ENCODE measurements at regions of chr18 and their contacts with region 1.

Region 1: DNA sequence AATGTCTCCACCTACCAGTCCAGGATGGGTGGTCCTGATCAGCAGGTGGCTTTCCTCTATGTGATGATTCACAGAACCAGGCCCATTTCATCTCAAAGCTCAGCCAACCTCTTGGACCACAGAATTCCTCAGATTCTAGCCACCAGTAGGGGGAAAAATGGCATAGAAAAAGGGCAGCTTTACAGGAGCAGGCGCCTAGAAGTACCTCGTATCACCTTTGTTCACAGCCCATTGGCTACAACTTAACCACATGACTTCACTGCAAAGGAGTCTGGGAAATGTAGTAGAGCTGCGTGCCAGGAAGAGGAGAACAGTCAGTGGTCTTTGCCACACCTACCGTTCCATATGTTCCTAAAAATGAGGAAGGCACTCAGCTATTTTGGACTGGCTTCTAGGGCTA is 62.8 kb upstream of the DTNA start:
- DNase-seq: no peak
- H3K4me3 ChIP-seq: no peak overlapping the region
- H3K27ac ChIP-seq: peak overlapping the region in 1 of 4 donors; percentile 66
- H3K4me1 ChIP-seq: peaks cover 0 to 59% (median 43%) of the 10 kb centered on the region in 4 donors
- H3K27me3 ChIP-seq: no peaks in the 10 kb centered on the region
- CTCF ChIP-seq: no peak
- EP300 ChIP-seq: no peak
- POLR2A ChIP-seq: no peak

Region 2: DNA sequence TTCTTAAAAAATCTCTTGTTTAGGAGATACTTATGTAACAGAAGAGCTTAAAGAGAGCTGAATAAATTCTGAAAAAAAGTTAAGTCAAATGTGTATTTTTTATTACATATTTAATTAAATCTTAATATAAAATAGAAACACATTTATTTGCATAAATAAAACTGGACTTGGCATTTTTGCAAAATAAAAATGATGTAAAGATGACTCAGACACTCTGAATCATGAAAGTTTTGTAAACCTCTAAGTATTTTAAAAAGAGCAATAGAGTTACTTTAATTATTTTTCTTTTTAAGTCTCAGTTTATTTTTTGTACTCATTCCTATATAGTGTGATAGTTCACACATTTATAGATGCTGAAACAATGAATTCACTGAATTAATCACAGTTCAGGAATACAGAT is 47.1 kb before region 1 on chr18:
- intact Hi-C with region 1: loop called (anchors 5 kb)
- DNase-seq: no peak
- H3K4me3 ChIP-seq: no peak overlapping the region
- H3K27ac ChIP-seq: no peak overlapping the region
- H3K4me1 ChIP-seq: peaks cover 0 to 52% (median 37%) of the 10 kb centered on the region in 4 donors
- H3K27me3 ChIP-seq: no peaks in the 10 kb centered on the region
- CTCF ChIP-seq: no peak
- EP300 ChIP-seq: no peak
- POLR2A ChIP-seq: no peak